Left cardiac atrium (tissue), 4 donors: ENCODE measurements at regions of chr4 and their contacts with region 1.

Region 1: GRCh38 chr4:112942077-112942476 is 107.4 kb upstream of the ANK2 start:
- DNase-seq: no peak
- ATAC-seq: no peak

Region 2: DNA sequence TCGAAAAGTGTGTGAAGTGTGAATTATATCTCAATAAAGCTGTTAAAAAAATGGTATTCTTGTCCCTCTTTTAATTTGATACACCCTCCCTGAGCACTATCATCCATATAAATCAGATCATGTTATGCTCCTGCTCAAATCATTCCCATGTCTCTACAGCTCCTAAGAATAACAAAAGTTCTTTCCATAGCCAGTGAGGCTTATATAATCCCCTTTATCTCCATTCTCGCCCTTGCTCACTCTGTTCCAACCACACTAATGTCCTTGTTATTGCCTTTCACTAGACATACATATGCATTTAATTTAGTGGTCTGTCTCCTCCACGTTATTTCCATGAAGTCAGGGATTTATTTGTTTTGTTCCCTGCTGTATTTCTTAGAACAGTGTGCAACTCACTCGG is 315.8 kb before region 1 on chr4:
- intact Hi-C with region 1: loop called in 1 of 2 experiments (anchors 5 kb)
- DNase-seq: no peak
- ATAC-seq: no peak

Region 3: DNA sequence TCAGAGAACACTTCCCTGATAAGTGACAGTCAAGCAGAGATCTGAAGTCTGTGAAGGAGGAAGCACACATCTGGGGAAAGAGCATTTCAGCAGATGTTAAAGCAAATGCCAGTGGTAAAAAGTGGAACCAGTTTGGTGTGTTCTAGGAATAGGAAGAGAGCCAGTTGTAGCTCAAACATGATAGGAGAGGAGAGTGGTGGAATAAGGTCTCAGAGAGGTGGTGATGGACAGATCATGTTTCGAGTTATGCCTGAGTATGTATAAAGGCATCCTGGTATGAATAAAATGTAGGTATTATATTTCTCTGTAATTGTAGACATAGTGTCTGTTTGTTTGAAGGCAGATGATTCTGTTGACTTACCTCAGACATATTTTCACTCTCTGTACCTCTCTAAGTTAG is 216.0 kb before region 1 on chr4:
- intact Hi-C with region 1: no loop called
- DNase-seq: no peak
- ATAC-seq: no peak

Region 4: GRCh38 chr4:112765317-112765975 is 176.6 kb before region 1 on chr4:
- intact Hi-C with region 1: loop called in 1 of 2 experiments (anchors 10 kb)
- DNase-seq: no peak
- ATAC-seq: peak in 1 of 2 donors; percentile 53